Ascending aorta (tissue), 2 donors: ENCODE measurements at regions of chr11 and their contacts with region 1.

Region 1: GRCh38 chr11:47552566-47553416 is at the start of gene CELF1:
- DNase-seq: peak; percentile 46 to 95
- H3K4me3 ChIP-seq: peak within 1 kb of the TSS; percentile 84 to 91
- H3K27ac ChIP-seq: peak within 1 kb of the TSS; percentile 88 to 89
- H3K4me1 ChIP-seq: peaks cover 0 to 26% of the 10 kb centered on the region in 2 donors
- H3K27me3 ChIP-seq: no peaks in the 10 kb centered on the region
- CTCF ChIP-seq: peak; percentile 67 to 97 (median 71)
- total RNA-seq, gene CELF1: 68.9 TPM

Region 2: GRCh38 chr11:47426061-47426956 is 126.5 kb before region 1 on chr11 and contains the start of gene PSMC3:
- intact Hi-C with region 1: loop called (anchors 1 kb)
- DNase-seq: peak; percentile 90 to 99
- H3K4me3 ChIP-seq: peak within 1 kb of the TSS; percentile 74 to 97
- H3K27ac ChIP-seq: peak within 1 kb of the TSS; percentile 85 to 92
- H3K4me1 ChIP-seq: peaks cover 9 to 14% of the 10 kb centered on the region in 2 donors
- H3K27me3 ChIP-seq: no peaks in the 10 kb centered on the region
- CTCF ChIP-seq: no peak
- total RNA-seq, gene PSMC3: 34.8 TPM

Region 3: GRCh38 chr11:47466701-47467250 is 86.0 kb before region 1 on chr11:
- intact Hi-C with region 1: loop called (anchors 5 kb)
- DNase-seq: no peak
- H3K4me3 ChIP-seq: no peak overlapping the region
- H3K27ac ChIP-seq: peak overlapping the region; percentile 61
- H3K4me1 ChIP-seq: peaks cover 0 to 7% of the 10 kb centered on the region in 2 donors
- H3K27me3 ChIP-seq: no peaks in the 10 kb centered on the region
- CTCF ChIP-seq: no peak

Region 4: GRCh38 chr11:47514825-47515647 is 37.8 kb before region 1 on chr11:
- intact Hi-C with region 1: loop called (anchors 5 kb)
- DNase-seq: no peak
- H3K4me3 ChIP-seq: no peak overlapping the region
- H3K27ac ChIP-seq: peak overlapping the region in 1 of 2 donors; percentile 73
- H3K4me1 ChIP-seq: peaks cover 4 to 64% of the 10 kb centered on the region in 2 donors
- H3K27me3 ChIP-seq: no peaks in the 10 kb centered on the region
- CTCF ChIP-seq: no peak

Region 5: DNA sequence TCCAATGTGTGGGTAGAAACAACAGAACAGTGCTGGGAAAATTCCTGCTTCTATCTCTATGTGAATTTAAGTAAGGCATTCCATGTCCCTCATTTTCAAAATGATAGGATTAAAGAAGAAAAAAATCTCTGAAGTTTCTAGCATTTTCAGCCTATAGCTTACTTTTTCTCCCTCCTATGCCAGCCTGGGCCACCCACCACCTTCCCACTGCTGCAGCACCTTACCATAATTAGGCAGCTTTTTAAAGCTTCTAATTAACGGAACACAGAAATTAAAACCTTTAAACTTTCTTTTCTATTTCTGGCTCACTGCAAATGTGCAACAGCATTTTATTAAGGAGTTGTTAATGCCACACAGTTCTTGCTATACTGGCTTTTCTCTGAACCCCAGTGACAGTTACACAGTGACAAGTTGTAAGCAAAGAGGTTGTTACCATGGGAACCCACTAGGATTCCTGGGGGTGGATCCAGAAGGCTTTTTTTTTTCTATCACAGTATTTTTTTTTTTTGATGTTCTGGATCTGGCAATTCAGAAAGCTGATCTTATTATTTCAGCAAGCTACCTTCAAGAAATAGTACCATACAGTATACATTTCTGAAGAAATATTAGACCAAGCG is 20.1 kb before region 1 on chr11:
- intact Hi-C with region 1: loop called (anchors 2 kb)
- DNase-seq: no peak
- H3K4me3 ChIP-seq: no peak overlapping the region
- H3K27ac ChIP-seq: peak overlapping the region; percentile 22 to 64
- H3K4me1 ChIP-seq: peaks cover 12 to 44% of the 10 kb centered on the region in 2 donors
- H3K27me3 ChIP-seq: no peaks in the 10 kb centered on the region
- CTCF ChIP-seq: no peak

Region 6: DNA sequence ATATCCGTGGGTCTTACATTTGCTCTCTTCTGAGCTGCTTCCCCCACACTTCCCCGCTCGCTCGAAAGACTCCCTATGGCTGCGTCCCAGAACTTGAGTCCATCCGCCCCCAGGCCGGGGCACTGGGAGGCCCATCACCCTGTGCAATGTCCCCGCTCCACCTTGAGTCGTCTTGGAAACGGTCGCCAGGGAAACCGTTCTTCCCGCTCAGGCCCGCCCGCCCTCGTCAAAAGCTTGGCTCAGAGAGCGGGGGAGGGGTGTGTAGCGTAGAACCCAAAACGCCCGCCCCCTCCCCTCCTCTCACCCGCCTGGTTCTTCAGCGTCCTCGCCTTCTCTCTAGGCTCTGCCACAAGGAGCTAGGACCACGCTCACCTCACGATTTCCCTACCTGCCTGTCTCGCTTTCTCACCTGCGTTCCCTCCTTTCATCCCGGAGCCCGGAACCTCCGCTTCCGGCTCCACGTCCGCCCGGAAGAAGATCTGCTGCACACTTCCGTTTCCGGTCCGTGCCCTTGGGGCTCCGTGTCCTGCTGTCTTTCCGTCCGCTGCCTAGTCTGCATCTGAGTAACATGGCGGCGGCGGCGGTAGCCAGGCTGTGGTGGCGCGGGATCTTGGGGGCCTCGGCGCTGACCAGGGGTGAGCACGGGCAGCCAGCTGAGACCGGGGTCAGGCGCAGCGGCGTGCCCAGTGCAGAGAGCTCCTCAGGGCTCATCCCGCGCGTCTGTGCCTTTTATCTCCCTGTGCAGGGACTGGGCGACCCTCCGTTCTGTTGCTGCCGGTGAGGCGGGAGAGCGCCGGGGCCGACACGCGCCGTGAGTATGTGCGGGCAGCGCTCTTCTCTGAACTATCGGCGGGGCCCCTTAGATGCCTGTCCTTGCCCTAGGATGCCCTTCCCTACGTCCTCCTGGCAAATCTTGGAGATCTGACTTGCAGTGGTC is 26.0 kb after region 1 on chr11 and contains the starts of genes KBTBD4 and NDUFS3:
- intact Hi-C with region 1: loop called (anchors 2 kb)
- DNase-seq: peak; percentile 57 to 92
- H3K4me3 ChIP-seq: peak within 1 kb of the TSS; percentile 74 to 93
- H3K27ac ChIP-seq: peak within 1 kb of the TSS; percentile 75 to 83
- H3K4me1 ChIP-seq: peaks cover 14 to 15% of the 10 kb centered on the region in 2 donors
- H3K27me3 ChIP-seq: no peaks in the 10 kb centered on the region
- CTCF ChIP-seq: no peak
- total RNA-seq, gene KBTBD4: 14.8 TPM
- total RNA-seq, gene NDUFS3: 19.9 TPM